ENCODE measurements at regions of chr5 and their contacts with region 1.

Region 1: GRCh38 chr5:134225618-134226440 is at the start of gene PPP2CA:
- DNase-seq: peak; percentile 98 to 100 (median 99)
- ATAC-seq: peak; percentile 76
- H3K4me3 ChIP-seq: peak within 1 kb of the TSS; percentile 75
- H3K4me3 Mint-ChIP-seq: peak within 1 kb of the TSS; percentile 99
- H3K27ac ChIP-seq: peak within 1 kb of the TSS; percentile 100
- H3K27ac Mint-ChIP-seq: peak within 1 kb of the TSS; percentile 100
- H3K4me1 ChIP-seq: peaks cover 23% of the 10 kb centered on the region
- H3K4me1 Mint-ChIP-seq: peaks cover 65% of the 10 kb centered on the region
- H3K27me3 ChIP-seq: no peaks in the 10 kb centered on the region
- H3K27me3 Mint-ChIP-seq: no peaks in the 10 kb centered on the region
- CTCF ChIP-seq: no peak
- total RNA-seq, gene PPP2CA: 188 to 195 TPM

Region 2: GRCh38 chr5:132866342-132867045 is 1359.3 kb before region 1 on chr5 and contains the starts of genes GDF9 and UQCRQ:
- CTCF ChIA-PET with region 1: no interaction called
- POLR2A ChIA-PET with region 1: no interaction called
- intact Hi-C with region 1: loop called in 1 of 2 experiments (anchors 5 kb)
- DNase-seq: peak; percentile 75 to 99 (median 84)
- ATAC-seq: peak; percentile 93
- H3K4me3 ChIP-seq: peak within 1 kb of the TSS; percentile 95
- H3K4me3 Mint-ChIP-seq: peak within 1 kb of the TSS; percentile 96
- H3K27ac ChIP-seq: peak within 1 kb of the TSS; percentile 95 to 98
- H3K27ac Mint-ChIP-seq: peak within 1 kb of the TSS; percentile 97
- H3K4me1 ChIP-seq: peaks cover 24% of the 10 kb centered on the region
- H3K4me1 Mint-ChIP-seq: peaks cover 31% of the 10 kb centered on the region
- H3K27me3 ChIP-seq: no peaks in the 10 kb centered on the region
- H3K27me3 Mint-ChIP-seq: no peaks in the 10 kb centered on the region
- CTCF ChIP-seq: no peak
- total RNA-seq, gene GDF9: 0.91 to 1.6 TPM
- total RNA-seq, gene UQCRQ: 119 to 132 TPM

Region 3: DNA sequence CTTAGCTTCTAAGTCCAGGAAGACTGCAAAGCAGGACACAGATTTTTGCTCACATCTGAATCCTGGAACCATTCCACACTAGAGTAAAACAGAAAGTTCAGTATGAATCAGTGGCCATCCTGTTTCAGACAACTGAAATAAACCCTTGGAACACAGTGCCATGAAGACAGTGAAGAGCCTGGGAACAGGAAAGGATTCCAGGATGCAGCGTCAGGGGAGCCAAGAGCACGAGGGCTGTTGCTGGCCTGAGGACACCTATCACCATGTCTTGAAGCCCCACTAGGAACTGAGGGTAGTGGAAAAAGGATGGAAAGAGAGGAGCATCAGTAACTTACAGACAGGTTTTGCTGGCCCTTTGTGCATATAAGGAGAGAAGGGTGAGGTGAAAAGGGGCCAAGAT is 498.2 kb before region 1 on chr5:
- CTCF ChIA-PET with region 1: no interaction called
- POLR2A ChIA-PET with region 1: no interaction called
- intact Hi-C with region 1: no loop called
- DNase-seq: peak in 1 of 14 experiments; percentile 7
- ATAC-seq: no peak
- H3K4me3 ChIP-seq: no peak overlapping the region
- H3K4me3 Mint-ChIP-seq: no peak overlapping the region
- H3K27ac ChIP-seq: no peak overlapping the region
- H3K27ac Mint-ChIP-seq: no peak overlapping the region
- H3K4me1 ChIP-seq: no peaks in the 10 kb centered on the region
- H3K4me1 Mint-ChIP-seq: no peaks in the 10 kb centered on the region
- H3K27me3 ChIP-seq: peaks cover 10 to 13% of the 10 kb centered on the region in 2 experiments
- H3K27me3 Mint-ChIP-seq: peaks cover 28% of the 10 kb centered on the region
- CTCF ChIP-seq: no peak

Region 4: GRCh38 chr5:134176511-134177368 is 49.1 kb before region 1 on chr5 and contains the start of gene SKP1:
- CTCF ChIA-PET with region 1: no interaction called
- POLR2A ChIA-PET with region 1: interaction called, 112 read pairs
- intact Hi-C with region 1: loop called (anchors 2 kb)
- DNase-seq: peak; percentile 76 to 94 (median 86)
- ATAC-seq: peak; percentile 83
- H3K4me3 ChIP-seq: peak within 1 kb of the TSS; percentile 98
- H3K4me3 Mint-ChIP-seq: peak within 1 kb of the TSS; percentile 97
- H3K27ac ChIP-seq: peak within 1 kb of the TSS; percentile 98 to 99
- H3K27ac Mint-ChIP-seq: peak within 1 kb of the TSS; percentile 98
- H3K4me1 ChIP-seq: peaks cover 19% of the 10 kb centered on the region
- H3K4me1 Mint-ChIP-seq: peaks cover 36% of the 10 kb centered on the region
- H3K27me3 ChIP-seq: no peaks in the 10 kb centered on the region
- H3K27me3 Mint-ChIP-seq: no peaks in the 10 kb centered on the region
- CTCF ChIP-seq: no peak
- total RNA-seq, gene SKP1: 303 to 314 TPM

Region 5: GRCh38 chr5:134365604-134366003 is 139.8 kb after region 1 on chr5:
- CTCF ChIA-PET with region 1: no interaction called
- POLR2A ChIA-PET with region 1: interaction called, 33 read pairs
- intact Hi-C with region 1: loop called in 1 of 2 experiments (anchors 5 kb)
- DNase-seq: no peak
- ATAC-seq: no peak
- H3K4me3 ChIP-seq: no peak overlapping the region
- H3K4me3 Mint-ChIP-seq: peak overlapping the region; percentile 14
- H3K27ac ChIP-seq: no peak overlapping the region
- H3K27ac Mint-ChIP-seq: no peak overlapping the region
- H3K4me1 ChIP-seq: peaks cover 22% of the 10 kb centered on the region
- H3K4me1 Mint-ChIP-seq: peaks cover 26% of the 10 kb centered on the region
- H3K27me3 ChIP-seq: no peaks in the 10 kb centered on the region
- H3K27me3 Mint-ChIP-seq: no peaks in the 10 kb centered on the region
- CTCF ChIP-seq: no peak

Region 6: GRCh38 chr5:134637161-134637582 is 411.3 kb after region 1 on chr5:
- CTCF ChIA-PET with region 1: no interaction called
- POLR2A ChIA-PET with region 1: interaction called, 13 read pairs
- intact Hi-C with region 1: loop called in 1 of 2 experiments (anchors 5 kb)
- DNase-seq: no peak
- ATAC-seq: no peak
- H3K4me3 ChIP-seq: no peak overlapping the region
- H3K4me3 Mint-ChIP-seq: no peak overlapping the region
- H3K27ac ChIP-seq: no peak overlapping the region
- H3K27ac Mint-ChIP-seq: no peak overlapping the region
- H3K4me1 ChIP-seq: peaks cover 8% of the 10 kb centered on the region
- H3K4me1 Mint-ChIP-seq: peaks cover 12% of the 10 kb centered on the region
- H3K27me3 ChIP-seq: no peaks in the 10 kb centered on the region
- H3K27me3 Mint-ChIP-seq: no peaks in the 10 kb centered on the region
- CTCF ChIP-seq: no peak

Region 7: DNA sequence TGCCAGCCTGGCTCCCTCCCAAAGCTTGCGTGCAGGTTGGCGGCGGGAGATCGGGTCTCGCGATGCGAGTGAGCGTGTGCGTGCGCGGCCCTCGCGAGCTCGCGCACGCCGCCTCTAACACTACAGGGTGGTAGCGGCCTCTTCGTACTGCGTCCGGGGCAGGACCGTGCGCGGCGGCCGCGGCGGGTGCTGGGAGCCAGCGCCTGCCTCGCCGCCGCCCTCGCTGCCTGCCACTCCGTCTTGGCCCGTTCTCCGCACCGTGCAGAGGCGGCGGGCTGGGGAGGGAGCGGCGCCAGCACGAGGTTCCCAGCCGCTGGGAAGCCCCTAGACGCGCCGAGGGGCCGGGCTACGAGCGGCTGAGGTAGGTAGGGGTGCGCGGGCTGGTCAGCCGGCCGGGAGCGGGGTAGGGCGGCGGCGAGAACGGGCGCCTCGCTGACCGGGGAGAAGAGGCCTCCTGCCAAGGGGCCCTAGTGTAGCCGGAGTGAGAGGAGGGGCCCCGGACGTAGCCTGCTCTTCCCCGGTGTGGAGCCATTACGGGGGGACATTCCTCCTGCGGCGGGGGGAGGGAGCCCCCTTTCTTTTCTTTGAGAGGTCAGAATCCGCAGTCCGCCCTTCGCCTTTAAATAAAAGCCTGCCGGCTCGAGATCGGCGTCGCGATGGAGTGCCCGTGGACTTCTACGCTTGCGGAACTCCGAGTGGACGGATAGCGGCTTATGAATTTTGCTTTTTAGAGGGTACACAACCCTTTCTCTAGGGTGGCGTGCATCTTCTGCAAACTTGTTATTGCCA is 620.2 kb after region 1 on chr5 and contains the start of gene C5orf24:
- CTCF ChIA-PET with region 1: no interaction called
- POLR2A ChIA-PET with region 1: interaction called, 7 read pairs
- intact Hi-C with region 1: loop called in 1 of 2 experiments (anchors 10 kb)
- DNase-seq: peak; percentile 83 to 98 (median 90)
- ATAC-seq: peak; percentile 90
- H3K4me3 ChIP-seq: peak within 1 kb of the TSS; percentile 76
- H3K4me3 Mint-ChIP-seq: peak within 1 kb of the TSS; percentile 86
- H3K27ac ChIP-seq: peak within 1 kb of the TSS; percentile 87
- H3K27ac Mint-ChIP-seq: peak within 1 kb of the TSS; percentile 95
- H3K4me1 ChIP-seq: peaks cover 35% of the 10 kb centered on the region
- H3K4me1 Mint-ChIP-seq: peaks cover 26% of the 10 kb centered on the region
- H3K27me3 ChIP-seq: no peaks in the 10 kb centered on the region
- H3K27me3 Mint-ChIP-seq: no peaks in the 10 kb centered on the region
- CTCF ChIP-seq: no peak
- total RNA-seq, gene C5orf24: 34.6 to 36.5 TPM